HCT116 (cell line): ENCODE measurements at regions of chr17 and their contacts with region 1.

Region 1: GRCh38 chr17:29180034-29180787 is at the start of gene MYO18A:
- DNase-seq: no peak
- ATAC-seq: peak; percentile 82
- H3K4me3 ChIP-seq: peak within 1 kb of the TSS; percentile 58 to 64
- H3K27ac ChIP-seq: peak within 1 kb of the TSS; percentile 85
- H3K4me1 ChIP-seq: peaks cover 32 to 54% of the 10 kb centered on the region in 2 experiments
- H3K27me3 ChIP-seq: no peaks in the 10 kb centered on the region
- CTCF ChIP-seq: peak; percentile 63 to 92 (median 80)
- POLR2A ChIP-seq: no peak
- RAD21 ChIP-seq: peak; percentile 65
- total RNA-seq, gene MYO18A: 37.2 TPM

Region 2: DNA sequence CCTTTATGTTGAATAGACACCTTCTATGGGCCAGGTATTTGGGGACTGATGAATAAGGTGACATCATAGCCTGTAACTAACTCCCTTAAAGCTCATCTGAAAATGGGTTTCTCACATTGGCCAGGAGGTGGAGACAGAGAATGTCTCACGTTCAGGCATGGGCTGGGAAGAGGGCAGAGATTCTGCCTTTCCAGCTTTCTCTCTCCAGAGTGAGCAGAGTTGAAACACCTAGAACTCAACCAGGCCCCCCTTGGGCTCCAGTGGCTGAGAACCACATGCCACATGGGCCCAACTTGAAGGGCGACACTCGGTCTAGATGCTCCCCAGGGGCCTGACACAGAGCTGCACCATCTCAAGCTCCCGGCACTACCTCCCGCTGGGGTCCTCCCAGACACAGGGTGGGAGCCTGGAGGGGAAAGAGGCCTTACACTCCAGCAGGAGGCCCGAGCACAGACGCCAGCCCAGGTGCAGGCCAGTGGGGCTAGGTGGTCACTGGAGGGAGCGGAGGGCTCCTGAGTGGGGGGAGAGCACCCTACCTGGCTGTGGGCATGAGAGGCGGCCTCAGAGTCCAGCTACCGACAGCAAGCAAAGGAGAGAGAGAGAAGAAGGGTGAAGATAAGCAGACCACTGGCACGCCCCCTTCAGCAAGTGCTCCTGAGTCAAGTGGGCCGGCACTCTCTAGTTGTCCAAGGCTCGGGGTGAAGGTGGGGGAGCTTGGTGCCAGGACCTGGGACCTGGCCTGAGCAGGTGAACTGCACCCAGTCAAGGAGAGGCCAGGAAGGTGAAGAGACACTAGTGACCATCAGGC is 55.9 kb before region 1 on chr17:
- CTCF ChIA-PET with region 1: interaction called, 16 read pairs
- POLR2A ChIA-PET with region 1: interaction called, 3 read pairs
- RAD21 ChIA-PET with region 1: interaction called, 3 to 5 read pairs
- intact Hi-C with region 1: no loop called
- DNase-seq: no peak
- ATAC-seq: peak; percentile 91
- H3K4me3 ChIP-seq: no peak overlapping the region
- H3K27ac ChIP-seq: no peak overlapping the region; the same call in 1 of the 2 replicates
- H3K4me1 ChIP-seq: peaks cover 14 to 21% of the 10 kb centered on the region in 2 experiments; a peak in 3 of 4 replicates
- H3K27me3 ChIP-seq: no peaks in the 10 kb centered on the region
- CTCF ChIP-seq: peak; percentile 66 to 92 (median 78)
- POLR2A ChIP-seq: no peak
- RAD21 ChIP-seq: peak; percentile 95

Region 3: DNA sequence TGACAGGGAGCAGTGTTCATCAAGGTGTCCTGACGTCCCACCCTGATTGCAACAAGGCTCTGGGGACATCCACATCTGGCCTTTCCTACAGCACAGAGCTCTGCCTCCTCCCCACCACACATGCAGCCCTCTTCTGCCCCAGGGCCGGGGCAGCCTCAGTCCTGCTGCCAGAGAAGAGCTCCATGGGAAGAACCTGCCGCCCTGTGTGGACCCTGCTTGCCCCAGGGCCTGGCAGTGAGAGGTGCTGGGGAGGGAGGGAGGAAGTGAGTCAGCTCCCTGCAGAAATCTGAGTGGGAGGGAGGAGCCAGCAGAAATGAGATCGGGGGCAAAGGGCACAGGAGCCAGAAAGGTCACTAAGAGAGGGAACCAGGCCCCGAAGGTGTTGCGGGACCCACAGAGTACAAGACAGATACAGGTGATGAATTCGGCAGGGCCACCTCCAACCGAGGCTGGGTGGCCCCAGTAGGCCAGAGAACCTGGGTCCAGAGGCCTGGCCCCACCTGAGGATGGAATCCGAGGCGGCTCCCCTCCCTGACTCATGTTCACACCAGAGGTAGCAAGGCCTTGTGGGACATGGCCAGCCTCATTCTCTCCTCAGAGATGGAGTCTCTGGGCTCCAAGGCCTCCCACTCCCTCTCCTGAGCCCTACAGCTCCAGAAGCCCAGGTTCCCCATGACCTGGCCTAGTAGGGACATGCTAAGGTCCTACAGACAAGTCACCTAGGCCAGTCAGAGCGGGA is 24.8 kb before region 1 on chr17:
- CTCF ChIA-PET with region 1: interaction called, 14 read pairs
- POLR2A ChIA-PET with region 1: interaction called, 31 read pairs
- RAD21 ChIA-PET with region 1: interaction called, 4 read pairs
- intact Hi-C with region 1: no loop called
- DNase-seq: peak; percentile 72
- ATAC-seq: peak; percentile 80
- H3K4me3 ChIP-seq: peak overlapping the region; percentile 3 to 35; a peak in 2 of 4 replicates
- H3K27ac ChIP-seq: peak overlapping the region; percentile 93
- H3K4me1 ChIP-seq: peaks cover 86 to 93% of the 10 kb centered on the region in 2 experiments
- H3K27me3 ChIP-seq: no peaks in the 10 kb centered on the region
- CTCF ChIP-seq: no peak
- POLR2A ChIP-seq: no peak
- RAD21 ChIP-seq: no peak

Region 4: GRCh38 chr17:29219378-29220047 is 39.3 kb after region 1 on chr17:
- CTCF ChIA-PET with region 1: interaction called, 18 read pairs
- POLR2A ChIA-PET with region 1: interaction called, 6 read pairs
- RAD21 ChIA-PET with region 1: no interaction called
- intact Hi-C with region 1: no loop called
- DNase-seq: peak; percentile 63
- ATAC-seq: peak; percentile 98
- H3K4me3 ChIP-seq: no peak overlapping the region
- H3K27ac ChIP-seq: 0 out of 2 replicates have a peak overlapping the region, but pooled peaks have one; percentile 3
- H3K4me1 ChIP-seq: peaks cover 0 to 9% of the 10 kb centered on the region in 2 experiments; a peak in 1 of 4 replicates
- H3K27me3 ChIP-seq: no peaks in the 10 kb centered on the region
- CTCF ChIP-seq: peak; percentile 93 to 98 (median 97)
- POLR2A ChIP-seq: no peak
- RAD21 ChIP-seq: peak; percentile 90

Region 5: GRCh38 chr17:29293890-29294579 is 113.8 kb after region 1 on chr17 and contains the start of gene NUFIP2:
- CTCF ChIA-PET with region 1: interaction called, 3 read pairs
- POLR2A ChIA-PET with region 1: interaction called, 12 read pairs
- RAD21 ChIA-PET with region 1: no interaction called
- intact Hi-C with region 1: no loop called
- DNase-seq: peak; percentile 96
- ATAC-seq: peak; percentile 92
- H3K4me3 ChIP-seq: peak within 1 kb of the TSS; percentile 97
- H3K27ac ChIP-seq: peak within 1 kb of the TSS; percentile 97
- H3K4me1 ChIP-seq: peaks cover 11 to 19% of the 10 kb centered on the region in 2 experiments; a peak in 3 of 4 replicates
- H3K27me3 ChIP-seq: no peaks in the 10 kb centered on the region
- CTCF ChIP-seq: no peak
- POLR2A ChIP-seq: peak; percentile 99
- RAD21 ChIP-seq: no peak
- total RNA-seq, gene NUFIP2: 66.5 TPM